GM10248 (cell line): ENCODE measurements at regions of chr1 and their contacts with region 1.

Region 1: DNA sequence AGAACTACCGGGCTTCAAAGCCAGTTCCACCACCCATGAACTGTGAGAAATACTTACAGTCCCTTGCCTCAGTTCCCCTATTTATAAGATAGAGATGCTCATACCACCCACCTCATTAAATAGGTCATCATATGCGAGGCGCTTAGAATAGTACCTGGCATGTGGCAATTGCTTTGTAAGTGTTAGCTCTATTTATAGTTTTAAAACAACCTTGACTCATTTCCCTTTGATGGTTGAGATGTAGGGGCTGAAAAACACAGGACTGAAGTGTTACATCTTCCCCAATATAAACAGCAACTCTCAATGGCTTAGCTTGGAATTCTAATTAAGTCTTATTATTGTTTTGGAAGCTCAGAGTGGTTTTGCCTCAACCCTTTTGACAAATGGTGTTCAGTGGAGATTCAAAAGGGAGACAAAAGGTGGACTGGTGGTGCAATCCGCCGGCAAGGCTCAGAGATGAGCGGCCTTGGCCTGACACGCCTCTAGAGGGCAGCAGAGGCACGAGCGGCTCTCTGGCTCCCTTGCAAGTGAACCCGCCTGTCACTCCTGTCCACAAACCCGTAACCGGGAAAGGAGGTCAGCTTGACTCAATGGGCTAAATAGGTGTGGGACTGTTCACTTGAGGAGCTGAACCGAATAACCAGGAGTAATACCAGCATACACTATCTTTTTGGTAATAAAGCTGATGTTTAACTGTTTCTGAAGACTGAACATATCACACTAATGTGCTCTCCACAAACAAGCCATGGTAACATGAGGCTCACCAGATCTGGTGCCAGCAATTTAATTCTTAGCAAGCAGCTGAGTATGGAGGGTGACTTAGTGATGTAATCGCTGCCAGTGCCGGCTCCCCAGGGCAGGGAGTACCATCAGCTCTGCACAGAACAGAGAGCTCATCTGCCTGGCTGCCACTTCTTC is 19.5 kb upstream of the SMYD2 start:
- DNase-seq: peak; percentile 70
- CTCF ChIP-seq: peak; percentile 89

Region 2: DNA sequence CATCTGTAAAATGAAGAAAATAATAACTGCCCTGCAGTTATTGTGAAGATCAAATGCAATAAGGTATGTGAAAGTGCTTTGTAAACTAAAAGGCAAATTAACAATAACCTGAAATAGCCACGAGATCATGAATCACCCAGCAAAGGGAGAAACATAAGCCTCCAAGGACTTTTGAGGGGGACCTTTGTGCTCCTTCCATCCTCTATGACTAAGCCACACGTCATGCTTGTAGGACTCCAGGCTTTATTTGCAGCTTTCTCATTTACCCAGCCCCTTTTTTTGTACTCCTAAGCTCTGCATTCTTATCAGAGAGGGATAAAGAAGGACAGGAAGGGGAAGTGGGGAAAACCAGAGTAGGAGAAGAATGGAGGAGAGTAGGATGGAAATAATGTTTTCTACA is 158.6 kb before region 1 on chr1:
- CTCF ChIA-PET with region 1: no interaction called
- POLR2A ChIA-PET with region 1: no interaction called
- DNase-seq: no peak
- CTCF ChIP-seq: no peak

Region 3: DNA sequence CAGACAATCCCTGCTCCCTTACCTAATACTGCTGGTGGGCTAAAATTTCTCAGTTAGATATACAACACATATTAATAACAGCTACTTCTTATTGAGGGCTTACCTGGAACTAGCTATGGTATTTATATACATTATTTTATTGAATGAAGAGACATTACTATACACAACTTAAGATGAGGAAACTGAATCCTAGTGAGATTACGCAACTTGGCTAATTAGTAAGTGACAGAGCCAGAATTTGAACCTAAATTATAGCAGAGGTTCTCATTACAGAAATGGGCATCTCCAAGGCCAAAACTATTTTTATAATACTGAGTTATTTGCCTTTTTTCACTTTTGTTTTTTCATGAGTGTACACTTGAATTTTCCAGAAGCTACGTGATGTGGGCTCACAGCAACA is 25.0 kb before region 1 on chr1:
- CTCF ChIA-PET with region 1: interaction called, 14 read pairs
- POLR2A ChIA-PET with region 1: no interaction called
- DNase-seq: no peak
- CTCF ChIP-seq: no peak

Region 4: GRCh38 chr1:214281021-214281719 is 19.7 kb after region 1 on chr1 and contains the start of gene SMYD2:
- CTCF ChIA-PET with region 1: interaction called, 71 read pairs
- POLR2A ChIA-PET with region 1: no interaction called
- DNase-seq: peak; percentile 82
- CTCF ChIP-seq: no peak

Region 5: DNA sequence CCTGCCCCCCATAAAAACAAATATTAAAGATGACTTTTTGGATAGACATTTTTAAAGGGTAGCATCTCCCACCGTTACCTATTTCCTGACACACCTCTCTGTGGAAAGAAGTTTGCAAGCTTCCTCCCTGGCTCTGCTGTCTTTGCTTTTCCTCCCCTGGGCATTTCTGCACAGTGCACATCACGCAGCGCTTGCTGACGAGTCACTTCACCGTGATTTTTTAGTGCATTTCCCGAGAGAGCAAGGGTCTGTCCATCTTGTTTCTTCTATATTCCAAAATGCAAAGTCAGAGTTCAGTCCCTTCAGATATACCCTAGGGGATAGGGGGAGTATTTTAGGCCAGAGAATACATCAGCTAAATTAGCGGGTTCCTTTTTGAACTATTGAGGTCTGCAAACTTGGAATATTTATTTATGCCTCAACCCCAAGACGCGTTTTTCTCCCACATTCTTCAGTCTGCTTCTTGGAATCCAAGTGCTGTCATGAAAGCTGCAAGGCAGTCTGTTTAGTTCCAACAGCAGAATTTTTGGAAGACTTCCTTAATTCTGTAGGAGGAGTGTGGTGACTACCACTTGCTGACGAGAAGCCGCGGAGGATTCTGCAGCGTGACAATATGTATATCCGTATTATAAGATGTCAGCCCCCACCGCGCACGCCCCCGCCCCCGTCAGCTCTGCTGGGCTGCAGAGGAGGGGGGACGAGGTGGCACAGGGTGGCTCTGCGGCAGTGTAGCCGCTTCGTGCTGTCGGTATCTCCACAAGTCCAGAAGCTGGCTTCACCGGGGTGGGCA is 41.9 kb after region 1 on chr1:
- CTCF ChIA-PET with region 1: interaction called, 54 read pairs
- POLR2A ChIA-PET with region 1: no interaction called
- DNase-seq: no peak
- CTCF ChIP-seq: no peak

Region 6: GRCh38 chr1:214321705-214322453 is 60.4 kb after region 1 on chr1:
- CTCF ChIA-PET with region 1: interaction called, 452 read pairs
- POLR2A ChIA-PET with region 1: no interaction called
- DNase-seq: no peak
- CTCF ChIP-seq: no peak

Region 7: DNA sequence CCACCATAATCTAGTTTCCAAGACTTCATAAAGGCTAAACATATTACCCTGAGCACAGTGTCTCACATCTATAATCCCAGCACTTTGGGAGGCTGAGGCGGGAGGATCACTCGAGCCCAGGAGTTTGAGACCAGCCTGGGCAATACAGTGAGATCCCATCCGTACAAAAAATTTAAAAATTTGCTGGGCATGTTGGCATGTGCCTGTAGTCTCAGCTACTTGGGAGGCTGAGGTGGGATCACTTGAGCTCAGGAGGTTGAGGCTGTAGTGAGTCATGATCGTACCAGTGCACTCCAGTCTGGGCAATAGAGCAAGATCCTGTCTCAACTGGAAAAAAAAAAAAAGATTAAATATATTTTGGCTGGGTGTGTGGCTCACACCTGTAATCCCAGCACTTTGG is 199.8 kb after region 1 on chr1:
- CTCF ChIA-PET with region 1: no interaction called
- POLR2A ChIA-PET with region 1: no interaction called
- DNase-seq: no peak
- CTCF ChIP-seq: no peak